ENCODE measurements at regions of chr3 and their contacts with region 1.

Region 1: DNA sequence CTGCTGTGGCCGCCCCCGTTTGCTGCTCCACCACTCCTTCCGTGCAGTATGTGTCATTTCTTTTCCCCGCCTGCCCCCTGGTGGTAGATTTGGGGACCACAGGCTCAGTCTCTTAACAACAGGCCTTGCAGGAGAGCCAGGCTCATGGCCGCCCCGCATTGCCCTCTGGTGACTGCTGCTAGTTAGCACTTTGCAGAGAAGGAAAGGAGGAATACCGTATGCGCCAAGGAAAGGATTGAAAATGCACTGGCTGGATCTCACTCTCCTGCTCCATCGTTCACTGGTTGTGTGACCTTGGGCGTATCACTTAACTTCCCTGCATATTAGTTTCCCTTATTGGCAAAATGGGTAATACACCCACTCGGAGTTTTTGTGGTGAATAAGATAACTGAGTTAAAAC is 39.3 kb upstream of the PXYLP1 start:
- DNase-seq: peak; percentile 75
- H3K4me3 ChIP-seq: peak overlapping the region in 1 of 2 experiments; percentile 44; a peak in 1 of 4 replicates
- H3K27ac ChIP-seq: no peak overlapping the region
- H3K4me1 ChIP-seq: no peaks in the 10 kb centered on the region; a peak in 1 of 4 replicates
- H3K27me3 ChIP-seq: no peaks in the 10 kb centered on the region
- CTCF ChIP-seq: peak; percentile 98
- EP300 ChIP-seq: no peak
- RAD21 ChIP-seq: peak; percentile 98

Region 2: GRCh38 chr3:140898340-140899180 is 293.8 kb before region 1 on chr3:
- CTCF ChIA-PET with region 1: interaction called, 26 read pairs
- POLR2A ChIA-PET with region 1: no interaction called
- DNase-seq: peak; percentile 35
- H3K4me3 ChIP-seq: no peak overlapping the region
- H3K27ac ChIP-seq: no peak overlapping the region
- H3K4me1 ChIP-seq: no peaks in the 10 kb centered on the region
- H3K27me3 ChIP-seq: no peaks in the 10 kb centered on the region
- CTCF ChIP-seq: peak; percentile 67
- EP300 ChIP-seq: no peak
- RAD21 ChIP-seq: peak; percentile 69

Region 3: GRCh38 chr3:141011232-141011996 is 180.9 kb before region 1 on chr3:
- CTCF ChIA-PET with region 1: interaction called, 107 read pairs
- POLR2A ChIA-PET with region 1: no interaction called
- DNase-seq: peak; percentile 79
- H3K4me3 ChIP-seq: no peak overlapping the region
- H3K27ac ChIP-seq: no peak overlapping the region
- H3K4me1 ChIP-seq: no peaks in the 10 kb centered on the region; a peak in 1 of 4 replicates
- H3K27me3 ChIP-seq: no peaks in the 10 kb centered on the region
- CTCF ChIP-seq: peak; percentile 76
- EP300 ChIP-seq: no peak
- RAD21 ChIP-seq: peak; percentile 85

Region 4: DNA sequence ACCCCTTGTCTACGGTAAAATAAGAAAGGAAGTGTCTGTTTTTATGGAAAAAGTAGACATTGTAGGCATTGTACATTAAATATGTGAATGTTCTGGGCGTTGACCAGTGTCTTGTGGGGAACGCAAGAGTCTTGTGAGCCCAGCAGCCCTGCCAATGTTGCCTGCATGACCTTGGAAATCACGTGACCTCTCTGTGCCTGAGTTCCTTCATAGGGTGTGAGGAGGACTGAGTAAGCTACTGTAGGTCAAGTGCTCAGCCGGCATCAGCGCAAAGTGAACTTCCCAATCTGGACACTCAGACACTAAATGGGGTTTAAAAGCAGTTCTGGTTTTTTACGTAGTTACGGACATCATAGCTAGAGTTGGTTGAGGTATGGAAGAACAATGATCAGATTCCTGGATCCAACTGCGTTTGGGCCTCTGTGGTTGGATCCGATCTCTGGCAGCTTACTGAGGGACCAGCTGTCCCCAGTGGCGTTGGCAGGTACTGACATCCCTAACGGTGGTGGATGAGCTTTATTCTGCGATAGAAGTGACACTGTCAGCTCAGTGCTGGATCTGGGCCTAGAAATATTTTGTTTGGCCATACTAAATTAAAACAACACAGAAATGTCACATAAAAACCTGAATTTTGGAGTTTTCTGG is 77.4 kb before region 1 on chr3:
- CTCF ChIA-PET with region 1: interaction called, 12 read pairs
- POLR2A ChIA-PET with region 1: no interaction called
- DNase-seq: peak; percentile 50
- H3K4me3 ChIP-seq: no peak overlapping the region
- H3K27ac ChIP-seq: no peak overlapping the region
- H3K4me1 ChIP-seq: no peaks in the 10 kb centered on the region
- H3K27me3 ChIP-seq: no peaks in the 10 kb centered on the region
- CTCF ChIP-seq: peak; percentile 28; the same call in 1 of the 2 replicates
- EP300 ChIP-seq: no peak
- RAD21 ChIP-seq: peak; percentile 13; the same call in 1 of the 2 replicates

Region 5: DNA sequence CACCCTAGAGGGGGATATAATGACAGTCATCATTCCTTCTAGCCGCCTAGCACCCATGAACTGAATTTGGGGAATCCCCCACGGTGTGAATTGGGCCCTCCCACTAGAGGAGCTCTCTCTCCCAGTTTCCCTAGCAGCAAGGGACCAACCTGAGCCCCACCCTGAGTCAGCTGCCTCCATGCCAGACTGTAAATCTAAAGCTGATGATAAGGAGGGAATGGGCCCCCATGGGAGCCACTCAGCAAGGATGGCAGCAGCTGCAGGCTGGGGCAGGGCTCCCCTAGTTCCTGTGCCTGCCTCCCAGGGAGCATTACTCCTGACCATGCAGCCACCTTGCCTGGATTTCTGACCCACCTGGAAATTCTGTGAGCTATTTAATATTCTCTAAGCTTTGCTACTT is 17.7 kb before region 1 on chr3:
- CTCF ChIA-PET with region 1: interaction called, 16 read pairs
- POLR2A ChIA-PET with region 1: no interaction called
- DNase-seq: no peak
- H3K4me3 ChIP-seq: no peak overlapping the region
- H3K27ac ChIP-seq: no peak overlapping the region
- H3K4me1 ChIP-seq: no peaks in the 10 kb centered on the region
- H3K27me3 ChIP-seq: no peaks in the 10 kb centered on the region
- CTCF ChIP-seq: no peak
- EP300 ChIP-seq: no peak
- RAD21 ChIP-seq: no peak

Region 6: DNA sequence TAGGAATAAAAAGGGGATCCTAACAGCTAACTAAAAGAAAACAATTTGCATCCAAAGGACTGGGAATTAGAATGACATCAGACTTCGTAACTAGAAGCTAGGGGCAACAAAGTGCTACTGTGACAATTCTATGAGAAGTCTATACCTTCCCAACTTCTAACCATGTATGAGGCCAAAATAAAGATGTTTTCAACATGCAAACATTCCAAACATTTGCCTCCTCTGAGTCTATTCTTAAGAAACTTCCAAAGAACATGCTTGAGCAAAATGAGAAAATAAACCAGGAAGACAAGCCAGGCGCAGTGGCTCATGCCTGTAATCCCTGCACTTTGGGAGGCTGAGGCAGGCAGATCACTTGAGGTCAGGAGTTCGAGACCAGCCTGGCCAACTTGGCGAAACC is 532.7 kb after region 1 on chr3:
- CTCF ChIA-PET with region 1: no interaction called
- POLR2A ChIA-PET with region 1: no interaction called
- DNase-seq: no peak
- H3K4me3 ChIP-seq: no peak overlapping the region
- H3K27ac ChIP-seq: no peak overlapping the region
- H3K4me1 ChIP-seq: no peaks in the 10 kb centered on the region
- H3K27me3 ChIP-seq: no peaks in the 10 kb centered on the region
- CTCF ChIP-seq: no peak
- EP300 ChIP-seq: no peak
- RAD21 ChIP-seq: no peak

Measured in SK-N-SH (cell line).